ENCODE measurements at regions of chr14 and their contacts with region 1.

Region 1: GRCh38 chr14:22986508-22987054 is 4.2 kb upstream of the AJUBA start:
- DNase-seq: peak; percentile 55 to 94
- H3K4me3 ChIP-seq: no peak overlapping the region
- H3K27ac ChIP-seq: no peak overlapping the region
- H3K4me1 ChIP-seq: peaks cover 0 to 2% of the 10 kb centered on the region in 2 donors
- H3K27me3 ChIP-seq: no peaks in the 10 kb centered on the region
- CTCF ChIP-seq: peak; percentile 85 to 88 (median 85)

Region 2: DNA sequence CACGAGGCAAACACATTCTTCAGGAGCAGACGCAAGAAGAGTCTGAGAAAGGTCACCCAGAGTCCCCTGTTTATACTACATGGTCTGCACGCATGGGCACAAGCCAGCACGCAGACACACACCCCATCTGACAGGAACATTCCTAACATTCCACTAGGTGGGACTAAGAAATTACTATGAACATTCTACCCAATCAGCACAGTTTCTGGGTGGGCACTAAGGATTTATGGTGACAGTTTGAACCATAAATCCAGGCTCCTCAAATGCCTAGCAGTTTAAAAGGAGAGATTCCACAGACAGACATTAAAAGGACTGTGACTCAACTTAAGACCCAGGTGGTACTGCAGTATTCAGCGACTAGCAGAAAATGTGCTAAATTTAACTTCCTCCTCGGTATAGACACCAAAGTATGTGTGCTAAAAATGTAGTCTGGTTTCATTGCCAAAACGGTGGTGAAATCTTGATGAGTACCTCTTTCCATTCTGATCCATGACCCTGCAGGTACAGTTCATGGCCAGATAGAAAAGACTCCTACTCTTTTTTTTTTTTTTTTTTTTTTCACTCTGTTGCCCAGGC is 372.3 kb before region 1 on chr14:
- intact Hi-C with region 1: no loop called
- DNase-seq: peak in 1 of 2 donors; percentile 80
- H3K4me3 ChIP-seq: no peak overlapping the region
- H3K27ac ChIP-seq: peak overlapping the region; percentile 70 to 82
- H3K4me1 ChIP-seq: peaks cover 6 to 15% of the 10 kb centered on the region in 2 donors
- H3K27me3 ChIP-seq: no peaks in the 10 kb centered on the region
- CTCF ChIP-seq: no peak

Region 3: GRCh38 chr14:22766456-22767322 is 219.9 kb before region 1 on chr14 and contains the start of gene OXA1L:
- intact Hi-C with region 1: no loop called
- DNase-seq: peak; percentile 89 to 98
- H3K4me3 ChIP-seq: peak within 1 kb of the TSS; percentile 84 to 94
- H3K27ac ChIP-seq: peak within 1 kb of the TSS; percentile 78 to 85
- H3K4me1 ChIP-seq: peaks cover 0 to 19% of the 10 kb centered on the region in 2 donors
- H3K27me3 ChIP-seq: no peaks in the 10 kb centered on the region
- CTCF ChIP-seq: no peak
- total RNA-seq, gene OXA1L: 68.3 TPM

Region 4: GRCh38 chr14:22929104-22929847 is 57.3 kb before region 1 on chr14 and contains the start of gene PRMT5:
- intact Hi-C with region 1: loop called (anchors 1 kb)
- DNase-seq: peak; percentile 99 to 100
- H3K4me3 ChIP-seq: peak within 1 kb of the TSS; percentile 85 to 87
- H3K27ac ChIP-seq: peak within 1 kb of the TSS; percentile 87 to 91
- H3K4me1 ChIP-seq: peaks cover 0 to 14% of the 10 kb centered on the region in 2 donors
- H3K27me3 ChIP-seq: no peaks in the 10 kb centered on the region
- CTCF ChIP-seq: no peak
- total RNA-seq, gene PRMT5: 118 TPM

Region 5: DNA sequence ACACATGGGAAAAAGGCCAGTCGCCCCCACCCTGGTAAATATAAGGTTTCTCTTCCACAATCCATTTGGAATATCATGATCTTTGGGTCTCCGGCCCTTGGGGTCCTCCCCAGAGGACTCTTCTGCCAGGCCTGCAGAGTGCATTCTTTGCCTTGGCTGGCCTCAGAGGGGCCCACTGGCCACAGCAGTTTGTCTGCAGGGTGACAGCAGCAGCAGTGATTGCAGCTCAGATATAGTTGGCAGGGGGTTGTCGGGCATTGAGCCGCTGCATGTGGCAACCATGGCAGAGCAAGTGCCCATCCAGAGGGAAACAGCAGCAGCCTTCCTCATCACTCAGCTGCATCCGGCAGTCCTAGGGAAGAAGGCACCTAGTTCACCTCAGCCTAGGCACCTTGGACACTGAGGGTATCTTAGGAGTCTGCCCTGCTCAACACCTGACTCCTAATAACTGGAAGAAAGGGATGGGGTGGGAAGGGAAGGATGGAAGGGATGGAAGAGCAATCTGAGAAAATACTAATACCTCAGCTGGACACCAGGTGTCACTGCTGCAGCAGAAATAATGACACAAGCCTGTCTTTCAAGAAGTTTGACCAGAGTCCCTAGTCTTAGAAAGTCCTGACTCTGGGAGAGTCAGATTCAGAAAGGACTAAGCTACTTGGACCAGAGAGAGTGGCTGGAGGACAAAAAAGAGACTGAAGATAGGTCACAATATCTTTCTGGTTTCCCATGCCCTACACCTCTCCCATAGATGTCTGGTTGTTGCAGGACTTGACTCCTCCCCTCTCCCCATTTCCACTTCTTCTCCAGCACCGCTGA is 13.2 kb before region 1 on chr14:
- intact Hi-C with region 1: loop called (anchors 1 kb)
- DNase-seq: no peak
- H3K4me3 ChIP-seq: no peak overlapping the region
- H3K27ac ChIP-seq: no peak overlapping the region
- H3K4me1 ChIP-seq: peaks cover 0 to 22% of the 10 kb centered on the region in 2 donors
- H3K27me3 ChIP-seq: no peaks in the 10 kb centered on the region
- CTCF ChIP-seq: peak; percentile 64 to 68 (median 66)

Region 6: DNA sequence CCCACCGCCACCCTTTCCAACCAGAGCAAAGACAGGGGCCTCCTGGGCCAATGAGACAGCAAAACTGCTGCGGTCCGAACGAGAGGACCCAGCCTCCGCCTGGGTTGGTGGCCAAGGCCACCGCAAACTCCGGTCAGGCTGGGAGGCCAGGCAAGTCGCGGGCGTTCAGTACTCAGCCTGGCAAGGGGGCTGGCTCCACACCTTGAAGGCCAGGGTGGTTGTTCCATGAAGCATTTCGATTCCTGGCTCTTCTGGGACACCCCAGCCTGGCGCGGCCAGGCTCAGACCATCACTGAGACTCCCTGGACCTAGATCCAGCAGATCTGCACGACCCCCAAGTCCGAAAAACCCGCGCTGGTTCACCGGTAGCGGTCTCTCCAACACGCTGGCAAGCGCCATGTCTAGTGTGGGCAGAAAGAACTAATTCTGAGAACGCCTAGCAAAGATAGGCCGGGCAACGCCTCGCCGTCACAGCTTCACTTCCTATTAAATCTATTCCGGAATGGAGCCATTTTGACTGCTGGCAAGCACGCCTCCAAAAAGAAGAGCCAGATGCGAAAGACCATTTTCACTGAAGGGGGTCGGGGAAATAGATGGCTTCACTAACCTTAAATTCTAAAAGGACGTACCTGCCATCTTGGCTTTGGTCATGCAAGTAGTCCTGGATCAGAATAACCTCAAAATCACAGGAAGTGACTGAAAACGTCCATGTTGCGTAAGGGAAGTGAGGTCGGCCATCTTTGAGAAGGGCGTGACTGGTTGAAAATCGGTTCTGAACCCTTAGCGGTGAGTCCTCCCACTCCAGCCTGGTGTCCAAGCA is 48.1 kb after region 1 on chr14 and contains the start of gene PSMB5:
- intact Hi-C with region 1: loop called (anchors 2 kb)
- DNase-seq: peak; percentile 61 to 95
- H3K4me3 ChIP-seq: peak within 1 kb of the TSS; percentile 72 to 80
- H3K27ac ChIP-seq: peak within 1 kb of the TSS; percentile 91 to 93
- H3K4me1 ChIP-seq: peaks cover 7 to 8% of the 10 kb centered on the region in 2 donors
- H3K27me3 ChIP-seq: no peaks in the 10 kb centered on the region
- CTCF ChIP-seq: no peak
- total RNA-seq, gene PSMB5: 62.7 TPM

Region 7: GRCh38 chr14:23052182-23052623 is 65.6 kb after region 1 on chr14:
- intact Hi-C with region 1: no loop called
- DNase-seq: no peak
- H3K4me3 ChIP-seq: no peak overlapping the region
- H3K27ac ChIP-seq: no peak overlapping the region
- H3K4me1 ChIP-seq: peaks cover 0 to 13% of the 10 kb centered on the region in 2 donors
- H3K27me3 ChIP-seq: no peaks in the 10 kb centered on the region
- CTCF ChIP-seq: peak in 1 of 3 experiments; percentile 35

Measured in ascending aorta (tissue), 2 donors.